Heart right ventricle (tissue), 16 donors: ENCODE measurements at regions of chr1 and their contacts with region 1.

Region 1: DNA sequence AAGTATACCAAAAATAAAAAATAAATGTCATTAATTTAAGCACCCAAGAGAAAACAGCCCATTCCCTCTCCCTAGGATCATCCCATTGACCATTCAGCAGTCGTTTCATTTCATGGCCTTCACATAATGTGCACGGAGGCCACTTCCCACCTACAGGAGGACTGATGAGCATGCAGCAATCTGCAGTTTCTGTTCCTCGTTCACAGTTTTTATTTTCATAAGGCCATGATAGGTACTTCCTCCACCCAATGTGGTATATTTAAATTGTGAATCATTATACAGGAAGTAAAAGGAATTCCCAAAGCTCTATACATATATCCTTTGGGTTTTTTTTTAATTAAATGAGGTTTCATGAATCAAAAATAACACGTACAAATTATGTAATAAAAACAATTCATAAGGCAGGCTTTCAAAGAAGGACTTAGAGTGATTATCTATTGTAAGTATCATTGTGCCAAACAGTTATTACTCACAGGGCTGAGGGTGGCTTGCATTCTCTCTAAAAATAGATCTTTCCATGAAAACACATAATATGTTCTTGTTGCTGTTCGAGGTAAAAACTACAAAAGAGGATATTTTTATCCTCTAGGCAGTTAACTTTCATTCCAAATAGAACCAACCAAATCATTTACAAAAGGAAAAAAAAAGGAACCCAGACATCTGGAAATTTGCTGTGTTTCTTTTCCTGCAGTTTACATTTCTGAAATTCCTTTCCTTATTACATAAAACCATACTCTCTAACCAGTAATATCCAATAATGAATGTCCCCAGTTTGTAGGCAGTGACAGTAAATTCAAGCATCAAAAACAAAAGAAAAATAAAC is 27.5 kb upstream of the SLC44A3 start:
- DNase-seq: no peak
- ATAC-seq: peak; percentile 54 to 77 (median 70)
- H3K4me3 ChIP-seq: no peak overlapping the region
- H3K27ac ChIP-seq: peak overlapping the region; percentile 11 to 83 (median 64)
- H3K4me1 ChIP-seq: peaks cover 0 to 42% (median 21%) of the 10 kb centered on the region in 9 donors
- H3K27me3 ChIP-seq: no peaks in the 10 kb centered on the region
- CTCF ChIP-seq: peak in 5 of 9 donors; percentile 21 to 41 (median 31)

Region 2: GRCh38 chr1:94654031-94654430 is 138.7 kb before region 1 on chr1:
- intact Hi-C with region 1: loop called in 4 of 10 experiments (anchors 2 to 10 kb)
- DNase-seq: peak in 1 of 2 donors; percentile 18
- ATAC-seq: peak in 7 of 8 donors; percentile 2 to 42 (median 13)
- H3K4me3 ChIP-seq: no peak overlapping the region
- H3K27ac ChIP-seq: peak overlapping the region in 7 of 10 donors; percentile 18 to 75 (median 69)
- H3K4me1 ChIP-seq: peaks cover 0 to 30% (median 3%) of the 10 kb centered on the region in 9 donors
- H3K27me3 ChIP-seq: no peaks in the 10 kb centered on the region
- CTCF ChIP-seq: no peak

Region 3: GRCh38 chr1:94672934-94673333 is 119.8 kb before region 1 on chr1:
- intact Hi-C with region 1: loop called in 1 of 10 experiments (anchors 10 kb)
- DNase-seq: no peak
- ATAC-seq: no peak
- H3K4me3 ChIP-seq: no peak overlapping the region
- H3K27ac ChIP-seq: no peak overlapping the region
- H3K4me1 ChIP-seq: no peaks in the 10 kb centered on the region
- H3K27me3 ChIP-seq: no peaks in the 10 kb centered on the region
- CTCF ChIP-seq: no peak

Region 4: DNA sequence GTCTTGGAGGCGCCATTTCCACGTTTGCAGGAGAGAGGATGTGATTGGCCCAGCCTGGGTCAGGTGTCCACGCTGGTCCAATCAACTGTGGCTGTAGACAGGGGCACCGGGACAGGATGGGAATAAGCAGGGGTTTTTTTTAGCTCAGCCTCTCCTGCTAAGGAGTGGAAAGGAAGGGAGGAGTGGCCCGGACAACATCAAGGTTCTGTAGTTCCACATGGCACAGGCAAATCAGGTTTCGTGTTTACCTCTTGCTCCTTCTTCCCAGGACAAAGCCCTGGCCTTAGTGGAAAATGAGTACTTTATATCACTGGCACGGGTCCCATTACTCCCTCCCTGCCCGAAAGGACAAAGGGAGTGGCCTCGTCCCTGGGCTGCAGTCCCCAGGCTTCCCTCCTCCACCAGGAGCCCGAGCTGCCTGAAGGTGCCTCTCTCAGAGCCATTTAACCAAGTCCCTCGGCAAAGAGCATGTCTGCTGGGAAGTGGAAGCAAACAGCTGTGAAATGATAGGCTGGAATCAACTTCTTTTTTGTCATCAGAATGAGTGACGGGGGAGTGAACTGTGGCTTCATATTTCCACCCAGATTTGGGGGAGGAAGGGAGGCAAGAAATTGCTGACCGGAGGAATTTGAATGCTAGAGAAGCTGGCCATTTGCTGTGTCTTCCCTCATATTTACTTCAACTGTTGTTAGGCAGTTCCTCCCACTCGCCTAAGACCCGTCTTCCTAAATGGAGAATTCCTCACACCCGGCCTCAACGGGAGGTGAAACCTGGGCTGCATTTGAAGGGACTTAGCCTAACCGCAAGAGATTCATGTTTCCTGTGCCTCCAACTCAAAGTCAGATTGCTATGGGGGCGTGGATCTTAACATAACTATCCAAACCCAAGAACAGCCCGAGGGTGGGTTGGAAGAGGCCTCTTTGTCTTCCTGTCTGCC is 57.5 kb before region 1 on chr1:
- intact Hi-C with region 1: loop called in 1 of 10 experiments (anchors 10 kb)
- DNase-seq: peak; percentile 29 to 40
- ATAC-seq: peak; percentile 61 to 87 (median 70)
- H3K4me3 ChIP-seq: peak overlapping the region in 3 of 10 donors; percentile 7 to 18 (median 9)
- H3K27ac ChIP-seq: peak overlapping the region in 8 of 10 donors; percentile 6 to 77 (median 32)
- H3K4me1 ChIP-seq: peaks cover 0 to 33% (median 15%) of the 10 kb centered on the region in 9 donors
- H3K27me3 ChIP-seq: no peaks in the 10 kb centered on the region
- CTCF ChIP-seq: no peak

Region 5: DNA sequence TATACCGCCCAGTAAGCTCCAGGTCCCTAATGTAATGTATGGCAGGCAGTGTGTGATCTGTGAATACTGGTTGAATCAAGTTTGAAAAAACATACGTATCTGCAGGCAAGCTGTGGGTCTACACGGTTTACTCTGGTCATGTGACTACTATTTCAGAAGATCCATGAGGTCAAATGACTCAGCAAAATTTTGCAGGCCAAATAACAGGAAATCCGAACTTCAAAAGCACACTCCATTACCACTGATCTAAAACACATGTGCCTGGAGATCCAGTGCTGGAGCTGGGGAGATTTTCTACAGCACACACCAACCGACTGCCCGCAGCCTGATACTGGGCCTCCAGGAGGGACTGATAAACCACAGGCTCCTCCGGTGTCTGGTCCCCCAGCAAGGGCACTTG is 37.0 kb before region 1 on chr1:
- intact Hi-C with region 1: loop called in 3 of 10 experiments (anchors 2 to 5 kb)
- DNase-seq: peak in 1 of 2 donors; percentile 45
- ATAC-seq: peak; percentile 29 to 70 (median 42)
- H3K4me3 ChIP-seq: no peak overlapping the region
- H3K27ac ChIP-seq: peak overlapping the region in 4 of 10 donors; percentile 13 to 85 (median 70)
- H3K4me1 ChIP-seq: peaks cover 0 to 51% (median 32%) of the 10 kb centered on the region in 9 donors
- H3K27me3 ChIP-seq: no peaks in the 10 kb centered on the region
- CTCF ChIP-seq: no peak